Activated CD4-positive, alpha-beta T cell treated with anti-CD3 and anti-CD28 coated beads for 36 hours (primary cell): ENCODE measurements at regions of chr2 and their contacts with region 1.

Region 1: DNA sequence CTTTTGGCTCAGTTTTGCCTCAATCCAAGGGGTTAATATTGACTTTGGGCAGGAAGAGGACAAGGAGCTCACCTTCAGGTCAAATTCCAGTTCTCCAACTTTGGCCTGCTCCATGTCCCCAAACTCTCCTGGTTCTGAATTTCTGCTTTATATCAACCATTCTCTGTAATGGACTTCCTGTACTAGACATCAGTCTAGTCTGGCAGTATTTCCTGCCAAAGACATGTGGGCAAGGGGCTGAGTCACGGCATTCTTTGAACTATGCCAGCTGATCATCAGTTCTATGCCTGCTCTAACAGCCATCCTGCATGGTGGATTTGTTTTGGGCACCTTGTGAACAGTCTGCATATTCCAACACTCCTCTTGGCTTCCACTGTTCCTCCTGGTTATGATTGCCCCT is 199.4 kb downstream of the ZEB2 start:
- DNase-seq: peak; percentile 70
- ATAC-seq: peak; percentile 49
- H3K4me3 Mint-ChIP-seq: peak overlapping the region; percentile 13
- H3K27ac Mint-ChIP-seq: peak overlapping the region; percentile 71
- H3K4me1 Mint-ChIP-seq: peaks cover 47% of the 10 kb centered on the region
- H3K27me3 Mint-ChIP-seq: no peaks in the 10 kb centered on the region

Region 2: GRCh38 chr2:143128681-143129580 is 1191.6 kb before region 1 on chr2 and contains the start of gene ARHGAP15:
- CTCF ChIA-PET with region 1: no interaction called
- POLR2A ChIA-PET with region 1: no interaction called
- intact Hi-C with region 1: loop called in 1 of 2 experiments (anchors 5 kb)
- DNase-seq: peak; percentile 83
- ATAC-seq: peak; percentile 81
- H3K4me3 Mint-ChIP-seq: peak within 1 kb of the TSS; percentile 71
- H3K27ac Mint-ChIP-seq: peak within 1 kb of the TSS; percentile 99
- H3K4me1 Mint-ChIP-seq: peaks cover 34% of the 10 kb centered on the region
- H3K27me3 Mint-ChIP-seq: no peaks in the 10 kb centered on the region
- total RNA-seq, gene ARHGAP15: 62.6 to 64.3 TPM

Region 3: GRCh38 chr2:144084114-144084661 is 236.3 kb before region 1 on chr2:
- CTCF ChIA-PET with region 1: no interaction called
- POLR2A ChIA-PET with region 1: no interaction called
- intact Hi-C with region 1: no loop called
- DNase-seq: no peak
- ATAC-seq: no peak
- H3K4me3 Mint-ChIP-seq: no peak overlapping the region
- H3K27ac Mint-ChIP-seq: no peak overlapping the region
- H3K4me1 Mint-ChIP-seq: peaks cover 11% of the 10 kb centered on the region
- H3K27me3 Mint-ChIP-seq: no peaks in the 10 kb centered on the region

Region 4: GRCh38 chr2:144198117-144198516 is 122.4 kb before region 1 on chr2:
- CTCF ChIA-PET with region 1: interaction called, 3 read pairs
- POLR2A ChIA-PET with region 1: no interaction called
- intact Hi-C with region 1: loop called in 1 of 2 experiments (anchors 2 kb)
- DNase-seq: peak; percentile 16
- ATAC-seq: peak; percentile 17
- H3K4me3 Mint-ChIP-seq: no peak overlapping the region
- H3K27ac Mint-ChIP-seq: peak overlapping the region; percentile 87
- H3K4me1 Mint-ChIP-seq: peaks cover 64% of the 10 kb centered on the region
- H3K27me3 Mint-ChIP-seq: no peaks in the 10 kb centered on the region

Region 5: GRCh38 chr2:144256996-144257707 is 63.3 kb before region 1 on chr2:
- CTCF ChIA-PET with region 1: no interaction called
- POLR2A ChIA-PET with region 1: no interaction called
- intact Hi-C with region 1: no loop called
- DNase-seq: peak; percentile 19
- ATAC-seq: peak; percentile 69
- H3K4me3 Mint-ChIP-seq: no peak overlapping the region
- H3K27ac Mint-ChIP-seq: peak overlapping the region; percentile 26
- H3K4me1 Mint-ChIP-seq: peaks cover 32% of the 10 kb centered on the region
- H3K27me3 Mint-ChIP-seq: no peaks in the 10 kb centered on the region

Region 6: DNA sequence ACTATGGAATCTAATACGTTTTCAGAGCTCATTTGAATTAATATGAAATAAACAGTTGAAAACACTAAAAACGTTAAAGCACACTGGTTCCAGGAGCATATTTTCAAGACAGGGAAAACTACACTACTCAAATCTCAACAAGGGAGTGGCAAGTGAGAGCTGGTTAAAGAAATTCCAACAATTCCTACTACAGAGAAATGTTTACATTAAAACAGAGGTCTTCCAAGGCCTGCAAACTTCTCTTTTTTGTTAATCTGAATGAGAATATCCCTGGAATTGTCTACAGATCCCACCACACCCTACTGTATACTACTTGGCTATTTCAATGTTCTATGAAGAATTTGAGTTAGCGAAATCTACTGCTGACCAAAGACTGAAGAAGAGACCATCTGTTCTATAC is 32.1 kb before region 1 on chr2:
- CTCF ChIA-PET with region 1: no interaction called
- POLR2A ChIA-PET with region 1: interaction called, 16 read pairs
- intact Hi-C with region 1: no loop called
- DNase-seq: no peak
- ATAC-seq: no peak
- H3K4me3 Mint-ChIP-seq: no peak overlapping the region
- H3K27ac Mint-ChIP-seq: no peak overlapping the region
- H3K4me1 Mint-ChIP-seq: no peaks in the 10 kb centered on the region
- H3K27me3 Mint-ChIP-seq: no peaks in the 10 kb centered on the region

Region 7: GRCh38 chr2:144414324-144414845 is 93.9 kb after region 1 on chr2:
- CTCF ChIA-PET with region 1: no interaction called
- POLR2A ChIA-PET with region 1: no interaction called
- intact Hi-C with region 1: loop called in 1 of 2 experiments (anchors 1 kb)
- DNase-seq: peak; percentile 42
- ATAC-seq: peak; percentile 95
- H3K4me3 Mint-ChIP-seq: no peak overlapping the region
- H3K27ac Mint-ChIP-seq: no peak overlapping the region
- H3K4me1 Mint-ChIP-seq: peaks cover 20% of the 10 kb centered on the region
- H3K27me3 Mint-ChIP-seq: peaks cover 2% of the 10 kb centered on the region